ENCODE measurements at regions of chr7 and their contacts with region 1.

Region 1: GRCh38 chr7:44490351-44491200 is at the start of gene NUDCD3:
- DNase-seq: peak; percentile 63 to 88 (median 84)
- ATAC-seq: peak; percentile 84
- H3K4me3 ChIP-seq: peak within 1 kb of the TSS; percentile 92
- H3K4me3 Mint-ChIP-seq: peak within 1 kb of the TSS; percentile 85 to 96 (median 90)
- H3K27ac ChIP-seq: peak within 1 kb of the TSS; percentile 98
- H3K27ac Mint-ChIP-seq: peak within 1 kb of the TSS; percentile 90 to 97 (median 93)
- H3K4me1 ChIP-seq: peaks cover 28 to 30% of the 10 kb centered on the region in 2 donors
- H3K4me1 Mint-ChIP-seq: peaks cover 36 to 53% (median 48%) of the 10 kb centered on the region in 7 donors
- H3K27me3 ChIP-seq: peaks cover 0 to 3% of the 10 kb centered on the region in 2 donors
- H3K27me3 Mint-ChIP-seq: peaks cover 0 to 11% (median 3%) of the 10 kb centered on the region in 5 donors
- total RNA-seq, gene NUDCD3: 79.4 to 117 (median 91.0) TPM

Region 2: DNA sequence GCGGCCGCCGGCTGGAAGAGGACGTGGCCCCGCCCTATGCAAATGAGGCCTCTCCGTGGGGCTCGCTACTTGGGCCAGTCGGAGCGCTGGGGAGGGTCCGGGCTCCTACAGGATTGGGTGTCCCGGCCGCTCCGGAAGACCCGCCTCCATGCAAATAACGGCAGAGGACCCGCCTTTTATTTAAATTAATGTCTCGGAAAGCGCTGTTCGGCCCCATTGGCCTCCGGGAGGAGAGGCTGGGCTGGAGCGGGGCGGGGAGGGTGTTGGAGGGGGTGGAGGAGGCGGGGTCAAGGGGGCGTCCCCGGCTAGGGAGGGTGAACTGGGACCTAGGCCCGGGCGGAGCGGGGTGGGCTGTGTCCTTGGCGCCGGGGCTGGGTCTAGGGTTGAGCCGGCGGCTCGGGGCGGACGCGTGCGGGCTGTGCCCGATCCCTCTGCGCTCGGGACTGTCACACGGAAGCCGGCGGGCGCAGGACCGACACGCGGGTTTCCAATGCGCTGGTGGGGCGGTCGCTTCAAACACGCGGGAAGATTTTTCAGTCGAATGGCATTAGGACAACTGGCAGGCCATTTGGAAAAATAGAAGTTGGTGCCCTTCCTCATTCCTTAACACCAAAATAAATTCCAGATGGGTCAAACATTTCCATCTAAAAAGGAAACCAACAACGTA is 407.9 kb before region 1 on chr7:
- CTCF ChIA-PET with region 1: no interaction called
- POLR2A ChIA-PET with region 1: interaction called, 3 read pairs
- intact Hi-C with region 1: loop called (anchors 1 kb)
- DNase-seq: peak; percentile 88 to 99 (median 98)
- ATAC-seq: peak; percentile 96
- H3K4me3 ChIP-seq: peak overlapping the region; percentile 59
- H3K4me3 Mint-ChIP-seq: peak overlapping the region; percentile 79 to 91 (median 87)
- H3K27ac ChIP-seq: peak overlapping the region; percentile 92
- H3K27ac Mint-ChIP-seq: peak overlapping the region; percentile 44 to 95 (median 80)
- H3K4me1 ChIP-seq: peaks cover 15 to 16% of the 10 kb centered on the region in 2 donors
- H3K4me1 Mint-ChIP-seq: peaks cover 11 to 30% (median 18%) of the 10 kb centered on the region in 7 donors
- H3K27me3 ChIP-seq: no peaks in the 10 kb centered on the region
- H3K27me3 Mint-ChIP-seq: peaks cover 0 to 4% (median 0%) of the 10 kb centered on the region in 5 donors

Region 3: DNA sequence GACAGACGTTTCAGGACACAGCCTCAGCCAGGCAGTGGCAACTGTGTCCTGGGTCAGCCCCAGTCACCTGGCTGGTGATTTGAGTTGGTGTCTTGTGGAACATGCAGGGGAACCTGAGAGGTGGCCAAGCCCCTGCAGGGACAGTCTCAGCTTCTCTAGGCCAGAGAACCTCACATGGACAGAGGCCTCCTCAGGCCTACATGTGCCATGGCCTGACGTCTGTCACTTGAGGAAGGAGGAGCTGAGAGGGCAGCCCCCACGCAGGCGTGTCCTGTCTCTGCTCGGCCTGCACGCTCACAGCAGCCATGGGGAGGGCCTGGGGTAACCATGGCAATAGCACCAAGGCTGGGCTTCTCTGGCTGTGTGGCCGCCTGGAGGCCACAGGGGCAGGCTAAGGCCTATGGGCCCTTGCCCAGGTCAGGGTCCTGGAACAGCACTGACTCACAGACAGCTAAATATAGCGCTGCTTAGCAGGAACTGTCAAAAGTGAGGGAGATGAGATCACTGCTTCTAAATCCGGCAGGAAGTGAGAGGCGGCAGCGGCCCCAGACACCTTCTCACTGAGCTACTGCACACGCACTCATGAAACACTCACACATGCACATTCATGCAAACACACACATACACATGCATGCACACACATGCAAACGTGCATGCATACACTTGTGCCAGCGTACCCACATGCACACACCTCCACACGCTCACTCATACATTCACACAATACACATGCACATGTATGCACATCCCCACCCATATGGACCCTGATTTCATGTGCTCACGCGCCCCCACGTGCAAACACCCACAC is 232.8 kb before region 1 on chr7:
- CTCF ChIA-PET with region 1: no interaction called
- POLR2A ChIA-PET with region 1: interaction called, 10 read pairs
- intact Hi-C with region 1: loop called in 1 of 2 experiments (anchors 2 kb)
- DNase-seq: peak; percentile 44 to 75 (median 67)
- ATAC-seq: peak; percentile 83
- H3K4me3 ChIP-seq: peak overlapping the region; percentile 10
- H3K4me3 Mint-ChIP-seq: peak overlapping the region; percentile 22 to 87 (median 75)
- H3K27ac ChIP-seq: peak overlapping the region; percentile 79
- H3K27ac Mint-ChIP-seq: peak overlapping the region; percentile 82 to 96 (median 94)
- H3K4me1 ChIP-seq: peaks cover 17 to 20% of the 10 kb centered on the region in 2 donors
- H3K4me1 Mint-ChIP-seq: peaks cover 13 to 29% (median 26%) of the 10 kb centered on the region in 7 donors
- H3K27me3 ChIP-seq: no peaks in the 10 kb centered on the region
- H3K27me3 Mint-ChIP-seq: no peaks in the 10 kb centered on the region

Region 4: DNA sequence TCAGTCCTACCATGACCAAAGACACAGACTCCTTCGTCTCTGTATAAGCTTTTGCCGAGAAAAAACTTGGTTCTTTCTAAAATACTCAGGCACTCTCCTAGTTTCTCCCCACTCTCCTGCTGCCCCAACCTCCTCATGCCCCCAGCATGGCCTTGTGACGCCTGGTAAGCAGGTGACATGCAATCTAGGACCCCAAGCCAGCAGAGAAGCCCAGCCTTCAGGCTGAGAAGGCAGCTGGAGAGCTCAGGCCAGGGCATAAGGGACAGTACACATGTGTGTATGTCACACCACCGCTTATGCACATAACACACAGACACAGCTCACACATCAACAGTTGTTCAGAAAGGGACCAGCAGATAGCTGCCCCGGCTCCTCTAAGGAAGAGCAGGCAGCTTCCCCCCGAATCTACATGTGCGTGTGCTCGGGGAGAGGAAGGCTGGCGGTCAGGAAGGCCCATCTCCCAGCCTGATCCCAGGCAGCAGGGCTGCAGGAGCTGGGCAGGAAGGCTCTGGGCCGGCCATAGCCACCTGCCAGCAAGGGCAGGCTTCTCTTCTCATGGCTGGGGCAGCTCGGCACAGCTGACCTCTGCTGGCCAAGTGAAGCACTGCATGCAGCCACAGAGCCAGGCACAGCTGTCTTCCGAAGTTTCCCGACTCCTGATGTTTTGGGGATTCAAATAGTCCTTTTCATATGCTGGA is 74.7 kb after region 1 on chr7:
- CTCF ChIA-PET with region 1: interaction called, 4 read pairs
- POLR2A ChIA-PET with region 1: interaction called, 19 read pairs
- intact Hi-C with region 1: loop called (anchors 1 to 2 kb)
- DNase-seq: peak; percentile 25 to 72 (median 57)
- ATAC-seq: peak; percentile 92
- H3K4me3 ChIP-seq: no peak overlapping the region
- H3K4me3 Mint-ChIP-seq: no peak overlapping the region
- H3K27ac ChIP-seq: peak overlapping the region; percentile 41
- H3K27ac Mint-ChIP-seq: peak overlapping the region; percentile 3 to 83 (median 42)
- H3K4me1 ChIP-seq: no peaks in the 10 kb centered on the region
- H3K4me1 Mint-ChIP-seq: peaks cover 5 to 20% (median 11%) of the 10 kb centered on the region in 7 donors
- H3K27me3 ChIP-seq: no peaks in the 10 kb centered on the region
- H3K27me3 Mint-ChIP-seq: no peaks in the 10 kb centered on the region

Region 5: GRCh38 chr7:44606450-44607254 is 116.1 kb after region 1 on chr7 and contains the start of gene OGDH:
- CTCF ChIA-PET with region 1: interaction called, 3 read pairs
- POLR2A ChIA-PET with region 1: interaction called, 19 read pairs
- intact Hi-C with region 1: loop called (anchors 1 kb)
- DNase-seq: peak; percentile 99 to 100 (median 100)
- ATAC-seq: peak; percentile 95
- H3K4me3 ChIP-seq: peak within 1 kb of the TSS; percentile 71
- H3K4me3 Mint-ChIP-seq: peak within 1 kb of the TSS; percentile 81 to 99 (median 98)
- H3K27ac ChIP-seq: peak within 1 kb of the TSS; percentile 93
- H3K27ac Mint-ChIP-seq: peak within 1 kb of the TSS; percentile 93 to 100 (median 98)
- H3K4me1 ChIP-seq: peaks cover 13 to 17% of the 10 kb centered on the region in 2 donors
- H3K4me1 Mint-ChIP-seq: peaks cover 0 to 45% (median 37%) of the 10 kb centered on the region in 7 donors
- H3K27me3 ChIP-seq: no peaks in the 10 kb centered on the region
- H3K27me3 Mint-ChIP-seq: peaks cover 0 to 20% (median 0%) of the 10 kb centered on the region in 5 donors
- total RNA-seq, gene OGDH: 43.1 to 122 (median 66.3) TPM

Region 6: DNA sequence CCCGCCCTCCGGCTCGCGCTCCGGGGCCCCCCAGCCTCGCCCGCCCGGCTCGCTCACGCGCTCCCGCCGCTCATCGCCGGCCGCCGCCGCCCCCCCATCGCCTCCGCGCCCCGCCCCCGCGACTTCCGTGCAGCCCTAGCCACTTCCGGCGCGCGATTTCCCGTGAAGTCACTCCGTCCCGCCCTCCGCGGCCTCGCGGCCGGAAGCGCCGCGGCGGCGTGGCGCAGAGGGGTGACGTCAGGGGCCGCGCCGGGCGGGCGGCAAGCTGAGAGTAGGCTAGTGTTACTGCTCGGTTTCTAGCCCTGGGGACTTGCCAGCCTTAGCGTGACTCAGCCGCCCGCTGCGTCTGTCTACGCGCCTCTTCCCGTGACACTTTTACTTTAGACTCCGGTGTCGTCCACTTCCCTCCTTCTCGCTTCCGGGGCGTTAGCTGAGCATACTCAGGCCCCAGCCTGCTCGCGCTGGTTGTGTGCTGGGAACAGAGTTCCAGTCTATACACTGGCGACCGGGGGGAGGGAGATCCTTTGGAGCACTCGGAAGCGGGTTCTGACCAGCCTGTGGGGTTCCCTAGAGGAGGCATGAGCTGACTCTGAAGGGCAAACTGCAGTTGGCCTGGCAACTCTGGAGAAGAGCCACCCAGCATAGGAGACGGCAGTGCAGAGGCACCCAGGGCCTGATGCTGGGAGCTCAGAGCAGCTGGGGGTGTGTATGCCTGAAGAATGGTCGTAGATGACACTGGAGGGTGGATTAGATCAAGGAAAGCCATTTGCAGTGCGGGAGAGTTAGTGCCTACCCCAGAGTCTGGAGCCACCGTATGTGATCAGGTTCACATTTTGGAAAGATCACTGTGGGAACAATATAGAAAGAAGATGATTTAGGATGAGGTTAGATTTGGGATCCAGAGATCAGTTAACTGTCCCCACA is 395.1 kb after region 1 on chr7 and contains the start of gene PURB:
- CTCF ChIA-PET with region 1: no interaction called
- POLR2A ChIA-PET with region 1: interaction called, 8 read pairs
- intact Hi-C with region 1: loop called in 1 of 2 experiments (anchors 1 kb)
- DNase-seq: peak; percentile 97 to 99 (median 97)
- ATAC-seq: peak; percentile 92
- H3K4me3 ChIP-seq: peak within 1 kb of the TSS; percentile 88
- H3K4me3 Mint-ChIP-seq: peak within 1 kb of the TSS; percentile 92 to 97 (median 93)
- H3K27ac ChIP-seq: peak within 1 kb of the TSS; percentile 99
- H3K27ac Mint-ChIP-seq: peak within 1 kb of the TSS; percentile 98 to 100 (median 99)
- H3K4me1 ChIP-seq: peaks cover 26 to 50% of the 10 kb centered on the region in 2 donors
- H3K4me1 Mint-ChIP-seq: peaks cover 7 to 61% (median 46%) of the 10 kb centered on the region in 7 donors
- H3K27me3 ChIP-seq: no peaks in the 10 kb centered on the region
- H3K27me3 Mint-ChIP-seq: peaks cover 0 to 2% (median 0%) of the 10 kb centered on the region in 5 donors
- total RNA-seq, gene PURB: 16.5 to 30.5 (median 23.3) TPM